GM23248 (cell line): ENCODE measurements at regions of chr5 and their contacts with region 1.

Region 1: GRCh38 chr5:142014911-142015584 is 2.2 kb upstream of the GNPDA1 start:
- DNase-seq: peak; percentile 79
- H3K4me3 ChIP-seq: no peak overlapping the region
- H3K27ac ChIP-seq: peak overlapping the region; percentile 80
- H3K4me1 ChIP-seq: peaks cover 39% of the 10 kb centered on the region
- H3K27me3 ChIP-seq: no peaks in the 10 kb centered on the region

Region 2: GRCh38 chr5:141338538-141339306 is 676.3 kb before region 1 on chr5 and contains the start of gene PCDHGA2:
- in situ Hi-C with region 1: no loop called
- DNase-seq: peak; percentile 72
- H3K4me3 ChIP-seq: peak within 1 kb of the TSS; percentile 69
- H3K27ac ChIP-seq: peak within 1 kb of the TSS; percentile 20
- H3K4me1 ChIP-seq: no peaks in the 10 kb centered on the region
- H3K27me3 ChIP-seq: no peaks in the 10 kb centered on the region
- total RNA-seq, gene PCDHGA2: 6.3 and 7.3 TPM in 2 replicates

Region 3: GRCh38 chr5:141734501-141735230 is 280.4 kb before region 1 on chr5:
- in situ Hi-C with region 1: no loop called
- DNase-seq: peak; percentile 78
- H3K4me3 ChIP-seq: no peak overlapping the region
- H3K27ac ChIP-seq: no peak overlapping the region
- H3K4me1 ChIP-seq: no peaks in the 10 kb centered on the region
- H3K27me3 ChIP-seq: peaks cover 13% of the 10 kb centered on the region; the same call in 1 of the 2 replicates

Region 4: GRCh38 chr5:142128675-142129208 is 113.7 kb after region 1 on chr5:
- in situ Hi-C with region 1: loop called (anchors 5 kb)
- DNase-seq: no peak
- H3K4me3 ChIP-seq: peak overlapping the region; percentile 76
- H3K27ac ChIP-seq: peak overlapping the region; percentile 36
- H3K4me1 ChIP-seq: peaks cover 18% of the 10 kb centered on the region
- H3K27me3 ChIP-seq: no peaks in the 10 kb centered on the region